Posterior vena cava (tissue), 2 donors: ENCODE measurements at regions of chr20 and their contacts with region 1.

Region 1: DNA sequence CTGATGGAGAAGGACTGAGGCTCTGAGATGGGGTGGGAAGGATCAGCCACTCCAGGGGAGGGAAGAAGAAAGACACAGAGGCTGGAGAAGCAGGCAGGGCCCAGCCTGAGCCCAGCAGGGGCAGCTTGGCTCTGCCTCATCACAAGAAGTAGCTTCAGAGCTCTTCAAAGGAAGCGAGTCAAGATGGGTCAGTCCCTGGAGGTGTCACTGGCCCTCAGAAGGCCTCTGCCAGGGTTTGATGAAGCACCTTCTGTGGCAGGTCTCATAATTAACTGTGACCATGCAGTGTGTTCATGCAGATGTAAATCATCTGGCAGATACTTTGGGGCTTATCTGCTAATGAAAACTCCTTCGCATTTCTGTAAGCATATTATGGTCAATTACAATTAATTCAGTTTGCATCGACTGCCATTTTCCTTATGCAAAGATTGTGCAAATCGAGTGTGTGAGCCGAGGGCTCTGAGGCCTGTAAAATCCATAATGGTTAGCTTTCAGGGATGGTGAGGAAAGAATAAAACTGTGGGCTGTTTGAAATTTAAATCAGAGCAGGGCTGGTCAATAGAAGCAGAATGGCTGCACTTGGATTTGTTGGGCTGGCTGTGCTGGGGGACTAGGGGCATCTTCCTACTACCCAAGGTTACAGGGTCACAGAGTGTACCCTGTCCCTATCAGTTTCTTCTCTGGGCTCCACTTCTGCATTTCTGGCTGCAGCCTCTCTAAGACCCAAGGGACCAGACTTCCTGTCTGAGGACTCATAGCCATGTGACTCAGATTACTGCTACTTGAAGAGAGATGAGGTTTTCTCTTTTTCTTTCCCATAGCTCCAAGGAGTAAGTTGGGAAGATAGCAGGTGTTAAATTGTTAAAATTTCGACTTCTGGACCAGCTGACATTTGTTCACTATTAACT is 376.6 kb downstream of the DHX35 start:
- DNase-seq: no peak

Region 2: GRCh38 chr20:39358052-39358451 is 19.3 kb after region 1 on chr20:
- intact Hi-C with region 1: loop called in 1 of 2 experiments (anchors 1 kb)
- DNase-seq: no peak